K562 (cell line): ENCODE measurements at regions of chr18 and their contacts with region 1.

Region 1: GRCh38 chr18:13525381-13526029 is 200.9 kb downstream of the FAM210A start:
- DNase-seq: no peak
- ATAC-seq: no peak
- H3K4me3 ChIP-seq: no peak overlapping the region
- H3K27ac ChIP-seq: no peak overlapping the region
- H3K4me1 ChIP-seq: no peaks in the 10 kb centered on the region
- H3K27me3 ChIP-seq: peaks cover 0 to 19% of the 10 kb centered on the region in 2 experiments; a peak in 3 of 5 replicates
- CTCF ChIP-seq: no peak
- EP300 ChIP-seq: no peak
- POLR2A ChIP-seq: no peak
- RAD21 ChIP-seq: no peak

Region 2: DNA sequence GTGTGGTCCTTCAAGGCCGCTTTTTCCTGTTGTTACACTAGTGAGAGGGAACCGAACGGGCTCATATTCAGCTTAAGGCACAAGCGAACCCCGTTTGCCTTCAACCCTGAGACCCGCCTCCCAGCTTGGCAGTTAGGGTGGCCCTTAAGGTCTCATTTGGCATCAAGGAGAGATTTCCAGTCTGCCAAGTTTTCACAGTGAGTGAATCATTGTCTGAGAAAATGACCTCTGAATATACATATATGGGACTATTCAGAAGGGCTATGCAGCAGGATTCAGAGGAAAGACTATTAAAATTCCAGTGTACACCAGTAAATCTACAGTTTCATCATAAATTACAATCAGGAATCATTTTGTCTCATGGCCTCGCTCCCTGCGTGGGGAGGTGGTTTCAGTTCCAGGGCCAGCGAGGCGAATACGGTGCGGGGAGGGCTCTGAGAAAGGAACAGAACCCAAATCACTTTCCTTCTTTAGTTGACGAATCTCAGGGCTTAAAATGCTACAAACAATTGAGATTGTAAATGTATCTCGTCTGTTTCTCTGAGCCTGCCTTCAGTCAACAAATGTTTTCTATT is 30.5 kb before region 1 on chr18:
- CTCF ChIA-PET with region 1: no interaction called
- POLR2A ChIA-PET with region 1: no interaction called
- in situ Hi-C with region 1: no loop called
- intact Hi-C with region 1: loop called (anchors 5 kb)
- DNase-seq: no peak
- ATAC-seq: no peak
- H3K4me3 ChIP-seq: no peak overlapping the region
- H3K27ac ChIP-seq: no peak overlapping the region
- H3K4me1 ChIP-seq: no peaks in the 10 kb centered on the region
- H3K27me3 ChIP-seq: peaks cover 22 to 55% of the 10 kb centered on the region in 2 experiments; a peak in 4 of 5 replicates
- CTCF ChIP-seq: no peak
- EP300 ChIP-seq: no peak
- POLR2A ChIP-seq: no peak
- RAD21 ChIP-seq: no peak

Region 3: GRCh38 chr18:13510594-13510993 is 14.9 kb before region 1 on chr18:
- CTCF ChIA-PET with region 1: no interaction called
- POLR2A ChIA-PET with region 1: no interaction called
- in situ Hi-C with region 1: no loop called
- intact Hi-C with region 1: no loop called
- DNase-seq: no peak
- ATAC-seq: no peak
- H3K4me3 ChIP-seq: no peak overlapping the region
- H3K27ac ChIP-seq: no peak overlapping the region
- H3K4me1 ChIP-seq: no peaks in the 10 kb centered on the region
- H3K27me3 ChIP-seq: peaks cover 0 to 5% of the 10 kb centered on the region in 2 experiments; a peak in 2 of 5 replicates
- CTCF ChIP-seq: no peak
- EP300 ChIP-seq: no peak
- POLR2A ChIP-seq: no peak
- RAD21 ChIP-seq: no peak